ENCODE measurements at regions of chr16 and their contacts with region 1.

Region 1: GRCh38 chr16:19645557-19645981 is 72.5 kb downstream of the KNOP1 start:
- DNase-seq: peak; percentile 49 to 82 (median 77)
- H3K4me3 ChIP-seq: no peak overlapping the region
- H3K27ac ChIP-seq: peak overlapping the region in 1 of 2 donors; percentile 72
- H3K4me1 ChIP-seq: peaks cover 9% of the 10 kb centered on the region
- H3K27me3 ChIP-seq: no peaks in the 10 kb centered on the region
- CTCF ChIP-seq: no peak
- EP300 ChIP-seq: no peak
- POLR2A ChIP-seq: no peak

Region 2: DNA sequence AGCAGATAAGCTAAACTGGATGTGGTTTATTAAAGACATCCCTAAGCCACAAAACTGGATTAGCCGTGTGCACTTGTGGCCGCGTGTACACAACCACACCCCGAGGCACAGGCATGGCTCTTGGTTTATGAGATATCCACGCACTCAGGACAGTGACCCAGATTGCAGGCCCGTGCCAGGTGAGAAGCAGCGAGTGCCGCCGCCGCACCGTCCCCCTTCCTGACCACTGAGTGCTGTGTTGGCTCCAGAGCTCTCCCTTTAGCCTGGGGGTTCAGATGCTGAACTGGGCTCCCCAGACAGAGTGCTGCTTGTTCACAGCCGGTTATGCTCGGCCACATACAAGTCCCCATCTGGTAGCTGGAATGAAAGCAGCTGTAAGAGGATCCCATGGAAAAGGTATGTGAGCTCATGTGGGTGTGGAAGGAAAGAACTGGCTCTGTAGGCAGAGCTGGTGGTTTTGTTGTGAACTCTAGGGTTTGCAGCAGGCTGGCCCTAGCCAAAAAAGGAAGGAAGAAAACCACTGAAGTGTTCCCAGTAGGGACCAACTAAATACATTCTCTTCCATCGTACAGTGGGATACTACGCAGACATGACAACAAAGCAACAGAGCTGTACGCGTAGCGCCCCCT is 42.9 kb after region 1 on chr16:
- intact Hi-C with region 1: loop called in 1 of 4 experiments (anchors 5 kb)
- DNase-seq: no peak
- H3K4me3 ChIP-seq: no peak overlapping the region
- H3K27ac ChIP-seq: no peak overlapping the region
- H3K4me1 ChIP-seq: peaks cover 14% of the 10 kb centered on the region
- H3K27me3 ChIP-seq: no peaks in the 10 kb centered on the region
- CTCF ChIP-seq: no peak
- EP300 ChIP-seq: no peak
- POLR2A ChIP-seq: no peak

Region 3: DNA sequence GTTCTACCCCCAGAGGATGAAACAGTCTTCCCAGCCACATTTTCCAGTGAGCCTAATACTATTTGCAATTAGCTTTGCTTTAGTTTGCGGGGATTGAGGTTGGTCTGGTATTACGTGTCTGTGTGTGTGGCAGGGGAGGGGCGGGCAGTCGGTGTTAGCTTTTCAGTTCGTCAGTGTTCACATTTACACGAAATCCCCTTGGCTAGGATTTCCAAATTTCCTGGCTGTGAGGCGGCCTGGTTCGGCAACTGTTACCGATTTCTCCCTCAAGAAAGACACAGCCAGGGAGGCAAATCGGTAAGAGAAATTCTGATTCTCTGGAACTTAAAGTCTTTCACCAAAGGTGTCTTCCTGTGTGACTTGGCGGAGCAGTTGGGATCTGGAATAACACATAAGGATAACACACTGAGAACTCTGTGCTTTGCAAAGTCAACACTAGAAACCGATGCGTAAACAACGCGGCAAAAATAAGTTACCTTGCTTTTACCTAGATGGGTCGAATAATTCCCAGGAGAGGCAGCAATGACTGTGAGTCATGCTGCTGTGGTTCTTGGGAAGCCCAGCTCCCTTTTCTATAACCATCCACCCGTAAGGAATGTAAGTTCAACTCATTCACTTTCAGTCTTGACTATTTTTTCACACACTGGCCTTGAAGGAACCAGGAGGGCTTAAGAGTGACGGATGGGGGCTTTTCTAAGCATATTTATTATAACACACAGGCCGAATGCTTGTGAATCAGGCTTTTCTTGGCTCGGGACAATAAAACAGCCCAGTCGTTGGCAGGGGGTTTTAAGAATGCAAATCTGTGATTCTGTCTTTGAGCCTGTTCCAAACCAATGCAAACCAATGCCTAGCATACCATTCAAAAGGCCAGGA is 214.8 kb after region 1 on chr16:
- intact Hi-C with region 1: no loop called
- DNase-seq: no peak
- H3K4me3 ChIP-seq: no peak overlapping the region
- H3K27ac ChIP-seq: peak overlapping the region in 1 of 2 donors; percentile 38
- H3K4me1 ChIP-seq: peaks cover 8% of the 10 kb centered on the region
- H3K27me3 ChIP-seq: no peaks in the 10 kb centered on the region
- CTCF ChIP-seq: no peak
- EP300 ChIP-seq: no peak
- POLR2A ChIP-seq: no peak

Measured in ovary (tissue), 10 donors.